ENCODE measurements at regions of chr5 and their contacts with region 1.

Region 1: GRCh38 chr5:127875235-127876021 is 172.2 kb downstream of the CCDC192 start:
- DNase-seq: peak in 7 of 10 donors; percentile 19 to 90 (median 54)

Region 2: GRCh38 chr5:127564002-127564769 is 311.2 kb before region 1 on chr5:
- intact Hi-C with region 1: loop called (anchors 10 kb)
- DNase-seq: peak in 2 of 10 donors; percentile 37 to 43

Region 3: DNA sequence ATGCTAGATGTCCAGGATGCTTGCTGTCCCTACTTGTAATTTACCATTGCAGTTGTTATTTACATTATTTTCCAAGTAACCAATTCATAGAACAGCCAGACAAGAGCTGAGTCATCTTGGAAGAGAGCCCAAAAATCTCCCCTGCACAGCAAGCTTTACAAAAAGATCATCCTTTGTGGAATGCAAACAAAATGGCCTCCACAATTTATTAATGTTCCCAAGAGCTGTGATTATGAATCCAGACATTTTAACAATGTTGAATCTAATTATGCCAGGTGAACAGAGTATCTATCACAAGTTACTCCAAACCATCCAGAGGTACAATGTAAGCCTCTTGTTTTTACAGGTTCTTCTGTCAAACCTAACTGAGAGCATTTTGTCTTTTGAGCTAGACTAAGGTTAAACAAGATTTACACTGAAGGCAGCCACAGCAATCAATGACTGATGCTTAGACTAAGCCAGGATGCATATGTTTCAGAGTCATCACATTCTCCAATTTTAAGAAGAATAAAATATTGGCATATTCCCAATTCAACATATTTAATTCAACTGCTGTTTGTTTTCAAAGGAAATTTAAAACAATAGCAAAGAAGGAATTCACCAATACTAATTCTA is 112.8 kb after region 1 on chr5:
- intact Hi-C with region 1: no loop called
- DNase-seq: no peak